Activated T-helper 2 cell treated with anti-CD3 and anti-CD28 coated beads, Interferon-gamma antibody, Interleukin-2, Interleukin-4, amounts not matched to agents 10 μg/mL and 5 μg/mL and 100 μg/mL, durations not matched to agents 14 hours and 24 hours and 36 hours (primary cell): ENCODE measurements at regions of chr3 and their contacts with region 1.

Region 1: DNA sequence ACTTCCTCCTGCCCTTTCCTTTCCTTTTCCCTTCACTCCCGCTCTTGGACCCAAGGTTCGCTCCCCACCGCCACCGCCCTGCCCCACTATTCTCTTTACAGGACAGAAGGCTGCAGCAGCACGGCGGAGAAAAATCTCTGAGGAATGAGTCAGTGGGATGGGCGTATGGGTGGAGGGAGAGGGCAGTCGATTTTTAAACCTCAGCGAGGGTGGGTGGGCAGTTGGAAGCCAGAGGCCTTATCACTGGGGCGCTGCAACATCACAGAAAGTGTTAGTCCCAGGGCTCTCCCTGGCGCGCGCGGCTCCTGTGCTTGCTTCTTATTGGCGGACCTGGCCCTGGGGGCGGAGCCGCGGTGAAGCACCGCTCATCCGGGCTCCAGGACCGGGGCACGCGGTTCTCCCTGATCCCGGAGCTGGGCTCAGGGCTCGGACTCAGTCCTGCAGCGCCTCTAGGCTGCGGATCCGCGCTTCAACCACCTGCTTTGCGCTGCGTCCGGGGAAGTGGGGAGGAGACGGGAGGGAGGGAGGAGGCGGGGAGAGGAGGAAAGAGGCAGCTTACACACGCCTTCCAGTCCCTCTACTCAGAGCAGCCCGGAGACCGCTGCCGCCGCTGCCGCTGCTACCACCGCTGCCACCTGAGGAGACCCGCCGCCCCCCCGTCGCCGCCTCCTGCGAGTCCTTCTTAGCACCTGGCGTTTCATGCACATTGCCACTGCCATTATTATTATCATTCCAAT is at the start of gene ALCAM:
- DNase-seq: peak; percentile 77
- H3K4me3 Mint-ChIP-seq: peak within 1 kb of the TSS; percentile 94
- H3K27ac Mint-ChIP-seq: peak within 1 kb of the TSS; percentile 100
- H3K4me1 Mint-ChIP-seq: peaks cover 44% of the 10 kb centered on the region
- H3K27me3 Mint-ChIP-seq: peaks cover 22% of the 10 kb centered on the region
- total RNA-seq, gene ALCAM: 36.7 and 37.3 TPM in 2 replicates

Region 2: DNA sequence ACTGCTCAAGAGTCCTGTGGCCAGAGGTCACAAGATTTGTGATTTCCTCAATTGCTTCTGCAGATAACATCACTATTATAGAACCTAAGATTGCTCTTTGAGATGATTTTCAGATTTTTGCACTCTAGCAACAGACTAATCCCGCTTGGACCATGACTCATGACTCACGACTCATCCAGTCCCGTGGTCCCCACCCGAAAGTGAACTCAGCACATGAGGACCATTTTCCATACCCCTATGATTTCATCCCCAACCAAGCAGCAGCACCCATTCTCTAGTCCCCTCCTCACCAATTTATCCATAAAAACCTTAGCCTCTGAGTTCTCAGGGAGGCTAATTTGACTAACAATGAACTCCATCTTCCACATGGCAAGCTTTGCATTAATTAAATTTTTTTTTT is 106.1 kb before region 1 on chr3:
- intact Hi-C with region 1: no loop called
- DNase-seq: no peak
- H3K4me3 Mint-ChIP-seq: no peak overlapping the region
- H3K27ac Mint-ChIP-seq: no peak overlapping the region
- H3K4me1 Mint-ChIP-seq: no peaks in the 10 kb centered on the region
- H3K27me3 Mint-ChIP-seq: no peaks in the 10 kb centered on the region

Region 3: DNA sequence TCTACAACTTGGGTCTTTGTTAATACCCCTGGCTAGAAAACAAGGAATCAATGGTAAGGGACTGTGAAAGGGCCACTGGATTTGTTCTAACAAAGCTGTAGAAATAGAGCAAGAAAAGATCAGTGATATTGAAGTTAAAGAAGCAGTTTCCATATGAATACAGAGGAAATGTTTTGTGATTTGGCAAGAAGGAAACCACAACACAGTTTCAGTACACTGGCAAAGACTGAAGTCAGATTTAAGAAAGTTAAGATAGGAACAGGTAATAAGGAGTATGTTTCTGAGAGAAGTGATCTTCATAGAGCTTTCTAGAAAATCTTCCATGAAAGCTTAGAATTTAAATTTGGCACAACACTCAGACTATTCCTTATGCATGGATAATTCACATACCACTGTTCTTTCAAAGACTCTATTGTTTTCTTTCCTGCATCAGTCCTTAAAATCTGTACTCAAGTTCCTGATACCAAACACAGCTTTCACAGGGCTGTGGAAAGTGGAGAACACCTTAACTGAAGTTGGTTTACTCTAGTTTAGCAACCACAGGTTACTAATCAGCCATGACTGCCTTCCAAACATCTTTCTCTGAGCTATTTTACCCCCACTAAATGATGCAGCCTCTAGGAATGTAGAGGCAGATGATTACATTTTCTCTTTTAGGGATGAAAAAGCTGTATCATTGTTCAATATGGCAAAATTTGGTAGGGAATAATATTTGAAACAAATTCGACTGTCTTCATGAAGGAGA is 32.2 kb before region 1 on chr3:
- intact Hi-C with region 1: loop called (anchors 5 kb)
- DNase-seq: no peak
- H3K4me3 Mint-ChIP-seq: no peak overlapping the region
- H3K27ac Mint-ChIP-seq: no peak overlapping the region
- H3K4me1 Mint-ChIP-seq: peaks cover 13% of the 10 kb centered on the region
- H3K27me3 Mint-ChIP-seq: peaks cover 15% of the 10 kb centered on the region

Region 4: GRCh38 chr3:105402287-105402801 is 35.9 kb after region 1 on chr3:
- intact Hi-C with region 1: no loop called
- DNase-seq: no peak
- H3K4me3 Mint-ChIP-seq: no peak overlapping the region
- H3K27ac Mint-ChIP-seq: no peak overlapping the region
- H3K4me1 Mint-ChIP-seq: no peaks in the 10 kb centered on the region
- H3K27me3 Mint-ChIP-seq: no peaks in the 10 kb centered on the region

Region 5: DNA sequence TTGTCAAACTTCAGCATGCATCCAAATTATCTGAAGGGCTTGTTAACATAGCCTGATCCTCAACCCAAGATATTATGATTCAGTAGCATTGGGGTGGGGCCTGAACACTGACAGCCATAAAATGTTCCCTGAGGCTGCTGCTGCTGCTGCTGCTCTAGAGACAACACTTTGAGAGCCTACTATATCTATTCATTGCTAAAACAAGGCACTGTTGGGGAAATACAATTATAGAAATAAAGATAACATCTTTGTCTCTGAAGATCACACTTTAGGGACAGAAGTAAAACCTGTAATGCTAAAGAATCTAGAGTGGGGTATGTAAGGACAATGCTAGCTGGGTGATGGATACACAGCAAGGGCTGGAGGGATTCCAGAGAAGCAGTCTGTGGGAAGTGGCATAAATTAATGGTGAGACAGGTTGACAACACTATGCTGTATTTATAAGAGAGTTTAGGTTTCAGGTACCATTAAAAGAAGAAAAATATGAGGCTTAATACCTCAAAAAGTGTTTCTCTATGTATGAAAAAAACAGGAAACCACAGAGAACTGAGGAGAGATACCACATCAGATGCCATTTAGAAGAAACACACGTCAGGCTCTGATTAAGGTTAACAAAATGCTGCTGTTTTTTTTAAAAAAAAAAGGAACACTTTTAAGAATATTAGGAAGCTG is 386.4 kb after region 1 on chr3:
- intact Hi-C with region 1: loop called (anchors 2 kb)
- DNase-seq: peak; percentile 39
- H3K4me3 Mint-ChIP-seq: peak overlapping the region; percentile 48
- H3K27ac Mint-ChIP-seq: peak overlapping the region; percentile 95
- H3K4me1 Mint-ChIP-seq: peaks cover 70% of the 10 kb centered on the region
- H3K27me3 Mint-ChIP-seq: no peaks in the 10 kb centered on the region

Region 6: DNA sequence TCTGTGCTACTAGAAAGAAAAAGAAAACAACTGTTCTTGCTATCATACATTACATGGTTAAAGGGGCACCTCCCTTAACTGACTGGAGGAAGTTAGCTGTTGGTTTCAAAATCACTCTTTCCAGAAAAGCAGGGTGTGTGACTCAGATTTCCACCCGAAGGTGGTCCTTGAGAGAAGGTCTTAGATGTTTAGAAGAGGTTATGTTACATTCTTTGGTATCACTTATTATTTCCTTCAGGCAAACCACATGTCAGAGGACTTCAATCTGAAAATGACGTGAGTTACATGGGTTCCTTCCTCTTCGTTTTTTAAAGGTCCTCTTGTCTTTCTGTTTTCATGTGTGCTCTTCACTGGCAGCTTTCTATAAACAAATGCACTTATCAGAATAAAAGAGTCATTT is 810.2 kb after region 1 on chr3:
- intact Hi-C with region 1: loop called (anchors 10 kb)
- DNase-seq: peak; percentile 72
- H3K4me3 Mint-ChIP-seq: peak overlapping the region; percentile 57
- H3K27ac Mint-ChIP-seq: peak overlapping the region; percentile 91
- H3K4me1 Mint-ChIP-seq: peaks cover 59% of the 10 kb centered on the region
- H3K27me3 Mint-ChIP-seq: no peaks in the 10 kb centered on the region

Region 7: DNA sequence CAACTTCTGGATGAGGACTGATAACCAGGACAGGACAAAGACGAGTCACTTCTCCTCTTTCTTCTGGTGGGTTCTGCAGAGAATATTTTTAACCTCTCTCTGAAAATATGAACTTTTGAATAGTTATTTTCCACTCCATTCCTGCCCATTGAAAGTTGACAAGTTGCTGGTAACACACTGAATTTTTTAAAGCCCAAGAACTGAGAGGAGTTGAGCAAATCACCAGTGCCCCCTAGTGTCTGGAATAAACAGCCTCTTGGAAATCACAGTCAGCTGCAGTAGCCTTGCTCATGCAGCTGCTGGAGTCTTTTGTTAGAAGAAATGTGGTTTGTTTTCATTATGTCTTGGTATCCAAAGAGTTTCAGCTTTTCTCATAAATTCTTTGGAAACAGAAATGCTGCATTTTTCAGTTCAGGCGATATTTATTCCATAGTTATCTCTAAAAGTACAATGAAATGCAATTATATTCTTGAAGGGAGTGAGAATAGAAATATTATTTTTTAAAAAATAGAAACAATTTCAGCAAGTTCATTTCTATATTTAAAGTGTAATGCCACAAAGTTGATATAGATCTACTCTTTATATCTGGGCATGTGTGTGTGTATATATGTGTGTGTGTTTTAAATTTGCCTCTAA is 1243.3 kb after region 1 on chr3:
- intact Hi-C with region 1: loop called (anchors 5 kb)
- DNase-seq: peak; percentile 41
- H3K4me3 Mint-ChIP-seq: no peak overlapping the region
- H3K27ac Mint-ChIP-seq: peak overlapping the region; percentile 73
- H3K4me1 Mint-ChIP-seq: peaks cover 26% of the 10 kb centered on the region
- H3K27me3 Mint-ChIP-seq: no peaks in the 10 kb centered on the region